GM18951 (cell line): ENCODE measurements at regions of chr3 and their contacts with region 1.

Region 1: GRCh38 chr3:32467333-32468070 is 35.1 kb downstream of the CMTM6 start:
- POLR2A ChIP-seq: no peak

Region 2: DNA sequence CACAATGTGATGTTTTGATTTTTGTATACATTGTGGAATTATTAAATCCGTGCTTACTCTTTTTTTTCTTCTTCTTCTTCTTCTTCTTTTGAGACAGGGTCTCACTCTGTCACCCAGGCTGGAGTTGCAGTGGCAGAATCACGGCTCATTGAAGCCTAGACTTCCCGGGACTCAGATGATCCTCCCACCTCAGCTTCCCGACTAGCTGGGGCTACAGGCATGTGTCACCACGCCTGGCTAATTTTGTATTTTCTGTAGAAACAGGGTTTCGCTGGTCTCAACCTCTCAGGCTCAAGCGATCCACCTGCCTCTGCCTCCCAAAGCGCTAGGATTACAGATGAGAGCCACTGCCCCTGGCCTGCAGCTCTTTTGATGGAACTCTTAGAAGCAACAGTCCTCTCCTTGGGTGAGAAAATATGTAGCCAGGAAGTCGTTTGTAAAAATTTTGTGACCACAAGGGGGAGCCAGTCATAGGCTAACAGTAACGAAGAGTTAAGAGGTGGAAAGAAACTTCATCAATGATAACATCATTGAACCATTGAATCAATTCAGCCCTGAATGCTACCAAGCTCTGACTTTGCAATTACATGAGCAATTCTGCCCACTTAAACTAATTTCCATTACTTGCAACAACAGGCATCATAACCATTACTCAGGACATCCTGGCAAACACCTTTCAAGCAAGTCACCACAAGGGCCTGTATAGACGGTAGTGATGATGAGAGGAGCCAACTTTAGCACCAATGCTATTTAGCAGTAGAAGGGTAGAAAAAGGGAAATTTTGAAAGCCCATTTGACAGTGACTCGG is 92.5 kb before region 1 on chr3:
- in situ Hi-C with region 1: loop called (anchors 10 kb)
- POLR2A ChIP-seq: no peak